ENCODE measurements at regions of chr9 and their contacts with region 1.

Region 1: DNA sequence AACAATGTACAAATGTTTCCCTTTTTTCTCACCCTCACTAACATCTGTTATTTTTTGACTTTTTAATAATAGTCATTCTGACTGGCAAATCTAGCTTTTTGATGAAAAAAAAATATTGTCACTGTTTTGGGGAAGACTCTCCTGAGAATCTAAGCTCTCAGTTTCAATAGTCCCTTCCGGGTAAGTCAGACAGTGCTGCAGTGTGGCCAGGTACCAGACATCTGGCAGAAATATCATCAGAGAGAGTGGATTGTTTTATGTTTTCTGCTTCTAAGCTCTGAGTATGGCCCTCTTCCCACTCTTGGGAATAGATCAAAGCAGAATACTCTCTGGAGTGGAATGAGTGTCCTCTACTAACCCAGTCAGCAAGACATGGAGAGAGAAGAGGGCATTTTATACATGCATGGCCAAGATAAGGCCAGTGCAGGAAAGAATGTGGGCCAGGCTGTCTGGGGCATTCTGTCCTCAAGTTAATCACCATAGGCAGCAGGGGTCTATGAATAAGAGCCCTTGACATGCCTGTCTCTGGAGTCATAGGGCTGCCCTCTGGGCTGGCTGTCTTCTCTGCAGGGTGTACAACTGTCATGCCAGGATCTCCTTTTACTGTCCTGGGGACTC is 38.5 kb upstream of the OR2S2 start:
- DNase-seq: no peak
- H3K4me3 ChIP-seq: no peak overlapping the region
- H3K27ac ChIP-seq: no peak overlapping the region
- H3K4me1 ChIP-seq: no peaks in the 10 kb centered on the region
- CTCF ChIP-seq: no peak

Region 2: DNA sequence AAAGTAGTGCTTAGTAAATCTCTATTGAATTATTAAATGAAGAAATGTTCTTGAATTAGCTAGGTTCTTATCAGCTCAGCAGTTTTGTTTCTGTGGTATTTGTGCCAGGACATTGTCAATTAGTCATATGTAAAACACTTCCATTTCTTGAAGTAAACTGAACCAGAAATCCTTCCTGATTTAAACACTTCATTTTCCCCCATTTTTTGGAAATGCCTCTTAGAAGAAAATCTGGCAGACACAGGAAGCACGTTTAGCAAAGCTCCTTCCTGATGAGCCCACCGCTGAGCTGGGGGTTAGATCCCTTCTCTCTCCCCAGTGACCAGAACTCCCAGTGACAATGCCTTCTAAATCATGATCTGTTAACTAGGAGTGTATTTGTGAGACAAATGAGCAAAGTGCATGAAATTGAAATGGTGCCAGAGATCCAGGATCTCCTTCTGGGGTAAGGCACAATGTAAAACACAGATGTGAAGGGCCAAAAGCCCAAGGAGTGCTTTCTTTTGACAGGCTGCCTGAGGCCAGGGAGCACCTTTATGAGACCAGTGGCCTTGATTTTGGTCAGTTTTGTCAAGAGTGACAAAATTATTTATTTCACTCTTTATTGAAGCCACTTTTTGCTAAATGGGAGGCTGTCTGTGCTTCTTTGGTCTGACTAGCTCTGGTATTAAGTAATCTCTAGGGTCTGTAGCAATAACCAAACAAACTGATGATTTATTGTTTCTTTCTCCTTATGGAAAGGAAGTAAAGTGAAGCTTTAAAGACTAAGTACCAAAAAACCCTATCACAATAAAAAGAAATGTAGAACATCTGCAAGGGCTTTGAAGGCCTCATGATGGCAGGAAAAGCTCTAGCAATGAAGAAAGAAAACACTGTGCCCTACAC is 532.1 kb before region 1 on chr9:
- CTCF ChIA-PET with region 1: no interaction called
- POLR2A ChIA-PET with region 1: no interaction called
- intact Hi-C with region 1: no loop called
- DNase-seq: no peak
- H3K4me3 ChIP-seq: no peak overlapping the region
- H3K27ac ChIP-seq: no peak overlapping the region
- H3K4me1 ChIP-seq: no peaks in the 10 kb centered on the region
- CTCF ChIP-seq: no peak

Region 3: GRCh38 chr9:35984021-35984420 is 12.4 kb before region 1 on chr9:
- CTCF ChIA-PET with region 1: no interaction called
- POLR2A ChIA-PET with region 1: interaction called, 10 read pairs
- intact Hi-C with region 1: no loop called
- DNase-seq: no peak
- H3K4me3 ChIP-seq: no peak overlapping the region
- H3K27ac ChIP-seq: no peak overlapping the region
- H3K4me1 ChIP-seq: peaks cover 11% of the 10 kb centered on the region
- CTCF ChIP-seq: no peak

Measured in OCI-LY7 (cell line).